ENCODE measurements at regions of chr1 and their contacts with region 1.

Region 1: DNA sequence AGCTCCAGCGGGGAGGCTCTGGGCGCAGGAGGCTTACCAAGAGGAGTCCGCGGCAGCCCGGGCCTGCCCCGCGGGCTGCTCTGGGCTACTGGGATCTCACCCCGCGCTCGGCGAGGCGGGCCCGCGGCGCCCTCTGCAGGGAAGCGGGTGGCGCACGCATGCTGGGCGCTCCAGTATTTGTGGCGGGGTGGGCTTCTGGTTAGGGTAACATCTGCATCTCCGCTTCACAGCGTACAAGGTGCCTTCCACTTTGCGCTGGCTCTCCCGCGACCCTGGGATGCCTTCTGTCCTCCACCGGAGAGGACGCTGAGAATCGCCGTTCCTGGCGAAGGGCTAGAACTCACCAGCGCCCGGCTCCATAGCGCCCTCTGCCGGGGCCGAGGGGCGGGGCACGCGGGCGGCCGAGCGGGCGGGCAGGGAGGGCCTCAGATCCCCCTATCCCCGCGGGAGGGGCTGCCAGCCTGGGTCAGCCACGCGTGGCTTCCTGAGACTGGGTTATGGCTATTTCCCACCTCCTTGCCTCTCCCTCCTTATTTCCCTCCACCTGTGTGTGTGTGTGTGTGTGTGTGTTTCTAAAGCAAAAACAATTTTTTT is 46.6 kb upstream of the CTBS start:
- DNase-seq: peak; percentile 71
- ATAC-seq: peak; percentile 93
- H3K4me3 ChIP-seq: peak overlapping the region; percentile 47 to 62
- H3K27ac ChIP-seq: peak overlapping the region; percentile 91
- H3K4me1 ChIP-seq: peaks cover 18 to 25% of the 10 kb centered on the region in 2 experiments
- H3K27me3 ChIP-seq: no peaks in the 10 kb centered on the region
- CTCF ChIP-seq: peak; percentile 72 to 99 (median 92)
- POLR2A ChIP-seq: no peak
- RAD21 ChIP-seq: peak; percentile 87

Region 2: DNA sequence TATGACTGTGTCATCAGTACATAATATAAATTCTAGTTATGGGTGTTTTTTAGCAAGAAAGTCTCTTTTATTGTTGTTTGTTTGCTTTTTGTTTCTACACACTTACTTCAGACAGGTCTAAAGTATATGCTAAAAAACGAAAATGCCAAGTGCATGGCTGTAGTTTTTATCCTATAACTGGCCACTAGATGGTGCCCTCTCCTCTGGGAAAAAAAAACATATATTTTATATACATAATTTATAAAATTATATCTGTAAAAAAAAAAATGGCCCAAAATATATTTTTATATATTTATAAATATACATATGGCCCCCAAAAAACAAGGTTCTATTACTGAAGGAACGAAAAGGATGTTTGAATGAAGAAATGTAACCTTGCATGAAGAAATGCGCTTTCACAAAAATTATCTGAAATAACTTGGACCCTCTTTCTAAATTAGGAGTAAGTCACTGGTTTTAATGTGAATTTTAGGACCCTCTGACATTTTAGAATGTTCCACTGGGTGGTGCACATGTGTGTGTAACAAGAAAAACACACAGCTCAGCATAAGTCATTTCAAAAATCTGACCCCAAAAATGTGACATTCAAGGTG is 715.4 kb before region 1 on chr1:
- CTCF ChIA-PET with region 1: no interaction called
- POLR2A ChIA-PET with region 1: no interaction called
- RAD21 ChIA-PET with region 1: no interaction called
- intact Hi-C with region 1: loop called (anchors 10 kb)
- DNase-seq: no peak
- ATAC-seq: no peak
- H3K4me3 ChIP-seq: no peak overlapping the region
- H3K27ac ChIP-seq: no peak overlapping the region
- H3K4me1 ChIP-seq: peaks cover 0 to 12% of the 10 kb centered on the region in 2 experiments; a peak in 2 of 4 replicates
- H3K27me3 ChIP-seq: no peaks in the 10 kb centered on the region
- CTCF ChIP-seq: peak; percentile 37 to 52 (median 42); a peak in 4 of 6 replicates
- POLR2A ChIP-seq: no peak
- RAD21 ChIP-seq: peak; percentile 48

Region 3: GRCh38 chr1:84225646-84226045 is 395.2 kb before region 1 on chr1:
- CTCF ChIA-PET with region 1: no interaction called
- POLR2A ChIA-PET with region 1: no interaction called
- RAD21 ChIA-PET with region 1: no interaction called
- intact Hi-C with region 1: no loop called
- DNase-seq: no peak
- ATAC-seq: no peak
- H3K4me3 ChIP-seq: no peak overlapping the region
- H3K27ac ChIP-seq: peak overlapping the region; percentile 47; the same call in 1 of the 2 replicates
- H3K4me1 ChIP-seq: peaks cover 0 to 15% of the 10 kb centered on the region in 2 experiments; a peak in 2 of 4 replicates
- H3K27me3 ChIP-seq: no peaks in the 10 kb centered on the region
- CTCF ChIP-seq: no peak
- POLR2A ChIP-seq: no peak
- RAD21 ChIP-seq: no peak

Region 4: GRCh38 chr1:84442256-84442655 is 178.6 kb before region 1 on chr1:
- CTCF ChIA-PET with region 1: no interaction called
- POLR2A ChIA-PET with region 1: interaction called, 3 read pairs
- RAD21 ChIA-PET with region 1: interaction called in 1 of 2 experiments, 4 read pairs
- intact Hi-C with region 1: loop called (anchors 2 kb)
- DNase-seq: peak; percentile 67
- ATAC-seq: peak; percentile 93
- H3K4me3 ChIP-seq: no peak overlapping the region
- H3K27ac ChIP-seq: no peak overlapping the region
- H3K4me1 ChIP-seq: peaks cover 6 to 20% of the 10 kb centered on the region in 2 experiments; a peak in 3 of 4 replicates
- H3K27me3 ChIP-seq: no peaks in the 10 kb centered on the region
- CTCF ChIP-seq: peak; percentile 21 to 76 (median 57); a peak in 5 of 6 replicates
- POLR2A ChIP-seq: no peak
- RAD21 ChIP-seq: peak; percentile 85

Region 5: GRCh38 chr1:84506002-84506728 is 114.7 kb before region 1 on chr1 and contains the starts of genes GNG5 and SPATA1:
- CTCF ChIA-PET with region 1: no interaction called
- POLR2A ChIA-PET with region 1: no interaction called
- RAD21 ChIA-PET with region 1: interaction called in 1 of 2 experiments, 3 read pairs
- intact Hi-C with region 1: loop called (anchors 5 kb)
- DNase-seq: peak; percentile 91
- ATAC-seq: peak; percentile 90
- H3K4me3 ChIP-seq: peak within 1 kb of the TSS; percentile 83 to 85
- H3K27ac ChIP-seq: peak within 1 kb of the TSS; percentile 83
- H3K4me1 ChIP-seq: peaks cover 21 to 38% of the 10 kb centered on the region in 2 experiments
- H3K27me3 ChIP-seq: no peaks in the 10 kb centered on the region
- CTCF ChIP-seq: no peak
- POLR2A ChIP-seq: no peak
- RAD21 ChIP-seq: no peak; the same call in 1 of the 2 replicates
- total RNA-seq, gene GNG5: 193 TPM
- total RNA-seq, gene SPATA1: 3.1 TPM

Region 6: GRCh38 chr1:84877592-84877991 is 256.8 kb after region 1 on chr1:
- CTCF ChIA-PET with region 1: no interaction called
- POLR2A ChIA-PET with region 1: no interaction called
- RAD21 ChIA-PET with region 1: no interaction called
- intact Hi-C with region 1: no loop called
- DNase-seq: no peak
- ATAC-seq: no peak
- H3K4me3 ChIP-seq: no peak overlapping the region
- H3K27ac ChIP-seq: no peak overlapping the region
- H3K4me1 ChIP-seq: no peaks in the 10 kb centered on the region
- H3K27me3 ChIP-seq: no peaks in the 10 kb centered on the region
- CTCF ChIP-seq: no peak
- POLR2A ChIP-seq: no peak
- RAD21 ChIP-seq: no peak

Measured in HCT116 (cell line).